Breast epithelium (tissue), 4 donors: ENCODE measurements at regions of chr20 and their contacts with region 1.

Region 1: GRCh38 chr20:2237059-2237458 is 58.7 kb upstream of the TGM3 start:
- DNase-seq: peak; percentile 62 to 72
- H3K4me3 ChIP-seq: peak overlapping the region in 1 of 3 donors; percentile 28
- H3K27ac ChIP-seq: peak overlapping the region in 1 of 2 donors; percentile 69
- H3K4me1 ChIP-seq: no peaks in the 10 kb centered on the region
- H3K27me3 ChIP-seq: no peaks in the 10 kb centered on the region
- CTCF ChIP-seq: no peak
- POLR2A ChIP-seq: no peak

Region 2: GRCh38 chr20:3121271-3121911 is 884.3 kb after region 1 on chr20:
- intact Hi-C with region 1: loop called (anchors 5 kb)
- DNase-seq: no peak
- H3K4me3 ChIP-seq: no peak overlapping the region
- H3K27ac ChIP-seq: no peak overlapping the region
- H3K4me1 ChIP-seq: no peaks in the 10 kb centered on the region
- H3K27me3 ChIP-seq: no peaks in the 10 kb centered on the region
- CTCF ChIP-seq: no peak
- POLR2A ChIP-seq: no peak